Activated CD8-positive, alpha-beta T cell treated with anti-CD3 and anti-CD28 coated beads for 36 hours (primary cell): ENCODE measurements at regions of chr12 and their contacts with region 1.

Region 1: GRCh38 chr12:57803319-57803893 is 15.1 kb downstream of the AVIL start:
- DNase-seq: peak; percentile 31
- ATAC-seq: peak; percentile 70
- H3K4me3 Mint-ChIP-seq: no peak overlapping the region
- H3K27ac Mint-ChIP-seq: no peak overlapping the region
- H3K4me1 Mint-ChIP-seq: peaks cover 4% of the 10 kb centered on the region
- H3K27me3 Mint-ChIP-seq: no peaks in the 10 kb centered on the region
- CTCF ChIP-seq: peak; percentile 85

Region 2: GRCh38 chr12:57637364-57637763 is 166.0 kb before region 1 on chr12:
- CTCF ChIA-PET with region 1: no interaction called
- POLR2A ChIA-PET with region 1: no interaction called
- intact Hi-C with region 1: no loop called
- DNase-seq: no peak
- ATAC-seq: no peak
- H3K4me3 Mint-ChIP-seq: no peak overlapping the region
- H3K27ac Mint-ChIP-seq: no peak overlapping the region
- H3K4me1 Mint-ChIP-seq: peaks cover 6% of the 10 kb centered on the region
- H3K27me3 Mint-ChIP-seq: peaks cover 18% of the 10 kb centered on the region
- CTCF ChIP-seq: no peak

Region 3: GRCh38 chr12:57744777-57745484 is 58.5 kb before region 1 on chr12 and contains the start of gene TSPAN31:
- CTCF ChIA-PET with region 1: no interaction called
- POLR2A ChIA-PET with region 1: no interaction called
- intact Hi-C with region 1: no loop called
- DNase-seq: peak; percentile 99
- ATAC-seq: peak; percentile 81
- H3K4me3 Mint-ChIP-seq: peak within 1 kb of the TSS; percentile 92
- H3K27ac Mint-ChIP-seq: peak within 1 kb of the TSS; percentile 94
- H3K4me1 Mint-ChIP-seq: peaks cover 44% of the 10 kb centered on the region
- H3K27me3 Mint-ChIP-seq: no peaks in the 10 kb centered on the region
- CTCF ChIP-seq: no peak
- total RNA-seq, gene TSPAN31: 6.9 to 7.5 TPM

Region 4: DNA sequence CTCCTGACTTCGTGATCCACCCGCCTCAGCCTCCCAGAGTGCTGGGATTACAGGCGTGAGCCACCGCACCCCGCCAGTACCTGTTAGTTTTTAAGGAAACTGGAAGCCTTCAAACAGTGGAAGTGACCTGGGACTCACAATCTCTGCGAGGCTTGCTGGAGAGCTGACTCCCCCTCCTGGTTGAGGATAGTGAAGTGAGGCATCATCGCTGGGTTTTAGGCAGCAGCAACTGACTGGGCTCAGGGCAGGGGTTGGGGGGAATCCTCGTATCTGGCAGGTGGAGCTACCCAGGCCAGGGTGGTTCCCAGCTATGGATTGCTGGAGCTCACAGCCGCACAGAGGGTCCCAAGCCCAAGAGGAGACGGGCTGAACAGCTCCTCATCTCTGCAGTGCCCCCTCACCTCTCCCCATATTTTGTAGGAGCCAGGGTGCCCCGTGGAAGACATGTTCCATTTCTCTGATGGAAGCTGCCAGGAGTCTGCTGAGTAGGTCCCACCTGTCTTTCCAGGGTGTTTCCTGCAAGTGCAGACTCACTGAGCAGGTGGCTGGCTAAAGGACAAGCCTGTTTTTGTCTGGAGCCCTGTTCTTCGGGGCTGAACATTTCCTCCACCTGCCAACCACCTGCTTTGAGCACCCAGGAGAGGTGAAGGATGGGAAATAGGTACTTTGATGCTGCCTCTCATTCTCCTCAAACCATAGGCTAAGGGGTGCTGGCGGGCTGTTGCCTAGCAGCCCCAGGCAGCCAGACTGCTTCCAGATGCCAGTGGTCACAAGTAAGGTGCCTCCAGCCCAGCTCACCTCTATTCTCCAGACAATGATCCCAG is 12.0 kb after region 1 on chr12:
- CTCF ChIA-PET with region 1: interaction called, 52 read pairs
- POLR2A ChIA-PET with region 1: interaction called, 6 read pairs
- intact Hi-C with region 1: no loop called
- DNase-seq: no peak
- ATAC-seq: no peak
- H3K4me3 Mint-ChIP-seq: no peak overlapping the region
- H3K27ac Mint-ChIP-seq: no peak overlapping the region
- H3K4me1 Mint-ChIP-seq: no peaks in the 10 kb centered on the region
- H3K27me3 Mint-ChIP-seq: no peaks in the 10 kb centered on the region
- CTCF ChIP-seq: no peak

Region 5: GRCh38 chr12:57836442-57837375 is 33.3 kb after region 1 on chr12:
- CTCF ChIA-PET with region 1: interaction called, 14 read pairs
- POLR2A ChIA-PET with region 1: no interaction called
- intact Hi-C with region 1: no loop called
- DNase-seq: peak; percentile 79
- ATAC-seq: peak; percentile 70
- H3K4me3 Mint-ChIP-seq: peak overlapping the region; percentile 62
- H3K27ac Mint-ChIP-seq: peak overlapping the region; percentile 91
- H3K4me1 Mint-ChIP-seq: peaks cover 90% of the 10 kb centered on the region
- H3K27me3 Mint-ChIP-seq: no peaks in the 10 kb centered on the region
- CTCF ChIP-seq: no peak